Activated naive CD4-positive, alpha-beta T cell treated with anti-CD3 and anti-CD28 coated beads for 36 hours (primary cell): ENCODE measurements at regions of chr3 and their contacts with region 1.

Region 1: GRCh38 chr3:47791193-47791855 is 9.6 kb upstream of the SMARCC1 start:
- DNase-seq: no peak
- H3K4me3 Mint-ChIP-seq: no peak overlapping the region
- H3K27ac Mint-ChIP-seq: no peak overlapping the region
- H3K4me1 Mint-ChIP-seq: no peaks in the 10 kb centered on the region
- H3K27me3 Mint-ChIP-seq: no peaks in the 10 kb centered on the region

Region 2: GRCh38 chr3:47128137-47128536 is 663.2 kb before region 1 on chr3:
- CTCF ChIA-PET with region 1: no interaction called
- intact Hi-C with region 1: no loop called
- DNase-seq: no peak
- H3K4me3 Mint-ChIP-seq: no peak overlapping the region
- H3K27ac Mint-ChIP-seq: no peak overlapping the region
- H3K4me1 Mint-ChIP-seq: peaks cover 35% of the 10 kb centered on the region
- H3K27me3 Mint-ChIP-seq: no peaks in the 10 kb centered on the region

Region 3: GRCh38 chr3:47802734-47803477 is 11.6 kb after region 1 on chr3 and contains the start of gene DHX30:
- CTCF ChIA-PET with region 1: interaction called, 5 read pairs
- intact Hi-C with region 1: loop called (anchors 2 kb)
- DNase-seq: peak; percentile 87
- H3K4me3 Mint-ChIP-seq: peak within 1 kb of the TSS; percentile 96
- H3K27ac Mint-ChIP-seq: peak within 1 kb of the TSS; percentile 92
- H3K4me1 Mint-ChIP-seq: peaks cover 21% of the 10 kb centered on the region
- H3K27me3 Mint-ChIP-seq: no peaks in the 10 kb centered on the region
- total RNA-seq, gene DHX30: 65.6 to 69.9 TPM

Region 4: GRCh38 chr3:47984097-47984728 is 192.9 kb after region 1 on chr3:
- CTCF ChIA-PET with region 1: no interaction called
- intact Hi-C with region 1: no loop called
- DNase-seq: no peak
- H3K4me3 Mint-ChIP-seq: no peak overlapping the region
- H3K27ac Mint-ChIP-seq: no peak overlapping the region
- H3K4me1 Mint-ChIP-seq: peaks cover 3% of the 10 kb centered on the region
- H3K27me3 Mint-ChIP-seq: no peaks in the 10 kb centered on the region

Region 5: DNA sequence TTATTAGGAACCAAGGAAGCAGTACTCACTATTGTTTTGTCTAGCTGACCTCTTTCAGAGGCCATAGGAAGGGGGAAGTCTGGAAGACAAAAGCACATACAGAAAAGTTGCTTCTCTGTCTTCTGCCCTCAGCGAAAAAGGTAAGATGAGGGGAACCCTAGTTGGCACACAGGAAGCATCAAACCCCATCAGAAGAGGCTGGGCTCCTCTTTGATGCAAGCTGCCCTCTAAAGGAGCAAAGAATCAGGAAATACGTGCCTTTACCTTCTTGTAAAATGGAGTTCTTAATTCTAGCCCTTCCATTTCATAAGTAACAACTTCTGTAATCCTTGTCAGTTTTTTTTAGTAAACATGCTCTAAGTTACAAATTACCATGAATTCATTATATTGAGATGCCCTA is 529.7 kb after region 1 on chr3:
- CTCF ChIA-PET with region 1: no interaction called
- intact Hi-C with region 1: no loop called
- DNase-seq: peak; percentile 10
- H3K4me3 Mint-ChIP-seq: no peak overlapping the region
- H3K27ac Mint-ChIP-seq: no peak overlapping the region
- H3K4me1 Mint-ChIP-seq: peaks cover 7% of the 10 kb centered on the region
- H3K27me3 Mint-ChIP-seq: no peaks in the 10 kb centered on the region